ENCODE measurements at regions of chr2 and their contacts with region 1.

Region 1: DNA sequence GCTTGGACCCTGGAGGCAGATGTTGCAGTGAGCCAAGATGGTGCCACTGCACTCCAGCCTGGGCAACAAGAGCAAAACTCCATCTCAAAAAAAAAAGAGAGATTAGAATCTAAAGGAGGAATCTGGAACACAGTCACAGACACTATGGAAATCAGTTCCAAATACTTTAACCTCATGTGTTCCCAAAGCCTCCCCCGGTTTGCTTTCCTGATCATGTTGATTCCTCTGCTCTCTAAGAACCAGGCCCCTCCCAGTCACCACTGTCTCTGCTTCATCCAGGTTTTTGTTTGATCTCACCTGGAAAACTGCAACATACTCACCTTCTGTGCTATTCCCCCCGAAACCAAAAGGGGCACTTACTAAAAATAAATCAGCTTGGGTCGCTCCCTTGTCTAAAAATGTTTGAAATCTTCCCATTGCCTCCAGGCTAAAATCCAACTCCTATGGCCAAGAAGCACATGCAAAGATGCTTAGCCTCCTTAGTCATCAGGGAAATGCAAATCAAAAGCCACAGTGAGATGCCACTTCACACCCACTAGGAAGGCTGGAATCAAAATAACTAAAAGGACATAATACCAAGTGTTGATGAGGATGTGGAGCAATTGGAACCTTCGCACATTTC is 6.2 kb upstream of the NEU2 start:
- DNase-seq: no peak

Region 2: GRCh38 chr2:232852676-232853075 is 173.6 kb before region 1 on chr2:
- intact Hi-C with region 1: loop called (anchors 2 kb)
- DNase-seq: no peak

Region 3: GRCh38 chr2:232887171-232887850 is 139.0 kb before region 1 on chr2:
- intact Hi-C with region 1: loop called (anchors 10 kb)
- DNase-seq: peak in 4 of 10 donors; percentile 28 to 85 (median 78)

Region 4: GRCh38 chr2:233165895-233166661 is 139.8 kb after region 1 on chr2:
- intact Hi-C with region 1: no loop called
- DNase-seq: no peak